ENCODE measurements at regions of chr2 and their contacts with region 1.

Region 1: GRCh38 chr2:120305296-120305695 is 40.6 kb upstream of the INHBB start:
- DNase-seq: no peak
- H3K4me3 ChIP-seq: no peak overlapping the region
- H3K27ac ChIP-seq: no peak overlapping the region
- H3K4me1 ChIP-seq: no peaks in the 10 kb centered on the region
- H3K27me3 ChIP-seq: no peaks in the 10 kb centered on the region
- CTCF ChIP-seq: no peak; the same call in 1 of the 2 replicates

Region 2: DNA sequence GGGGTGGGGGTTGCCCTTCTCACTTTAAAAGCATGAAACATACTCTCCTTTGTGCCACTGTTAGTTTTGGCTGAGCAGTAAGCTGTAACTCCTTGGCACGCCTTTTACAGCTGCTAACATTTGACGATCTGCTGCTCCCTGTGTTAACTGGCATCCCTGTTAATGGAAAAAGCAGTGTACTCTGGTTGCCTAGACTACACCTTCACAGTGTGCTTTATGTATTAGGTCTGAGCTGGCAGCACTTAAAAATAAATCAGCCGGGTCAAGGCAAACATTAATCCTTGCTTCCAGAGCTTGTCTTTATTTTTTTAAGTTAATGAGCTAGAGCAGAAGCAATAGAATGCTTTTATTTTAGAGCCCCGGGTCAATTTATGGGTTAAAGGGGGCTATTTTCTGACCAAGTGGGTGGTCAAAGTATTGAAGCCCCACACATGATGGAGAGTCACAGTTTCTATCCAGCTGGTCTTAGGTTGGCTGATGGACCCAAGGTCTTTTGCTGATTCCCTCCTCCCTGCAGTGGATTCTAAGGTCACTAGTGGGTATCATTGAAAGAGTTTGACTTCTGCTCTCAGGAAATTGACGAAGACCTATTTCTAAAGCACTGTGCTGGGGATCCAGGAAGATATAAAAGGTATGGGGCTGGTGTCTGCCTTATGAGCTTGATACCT is 706.6 kb before region 1 on chr2:
- CTCF ChIA-PET with region 1: no interaction called
- POLR2A ChIA-PET with region 1: interaction called, 13 read pairs
- intact Hi-C with region 1: no loop called
- DNase-seq: no peak
- H3K4me3 ChIP-seq: no peak overlapping the region
- H3K27ac ChIP-seq: no peak overlapping the region
- H3K4me1 ChIP-seq: no peaks in the 10 kb centered on the region
- H3K27me3 ChIP-seq: peaks cover 4% of the 10 kb centered on the region; the same call in 1 of the 2 replicates
- CTCF ChIP-seq: no peak

Region 3: GRCh38 chr2:120486441-120487378 is 181.4 kb after region 1 on chr2:
- CTCF ChIA-PET with region 1: no interaction called
- POLR2A ChIA-PET with region 1: interaction called, 14 read pairs
- intact Hi-C with region 1: no loop called
- DNase-seq: peak; percentile 71 to 96
- H3K4me3 ChIP-seq: no peak overlapping the region
- H3K27ac ChIP-seq: peak overlapping the region; percentile 77
- H3K4me1 ChIP-seq: peaks cover 19% of the 10 kb centered on the region
- H3K27me3 ChIP-seq: no peaks in the 10 kb centered on the region
- CTCF ChIP-seq: no peak